K562 (cell line): ENCODE measurements at regions of chr2 and their contacts with region 1.

Region 1: GRCh38 chr2:177263451-177264208 is 897 bp downstream of the NFE2L2 start:
- DNase-seq: peak; percentile 75 to 99 (median 82)
- ATAC-seq: peak; percentile 69
- H3K4me3 ChIP-seq: peak overlapping the region; percentile 91
- H3K27ac ChIP-seq: peak overlapping the region; percentile 98
- H3K4me1 ChIP-seq: peaks cover 32 to 38% of the 10 kb centered on the region in 2 experiments
- H3K27me3 ChIP-seq: no peaks in the 10 kb centered on the region
- CTCF ChIP-seq: peak; percentile 86 to 94 (median 91)
- EP300 ChIP-seq: peak; percentile 83
- POLR2A ChIP-seq: peak; percentile 85
- RAD21 ChIP-seq: peak; percentile 85 to 95

Region 2: DNA sequence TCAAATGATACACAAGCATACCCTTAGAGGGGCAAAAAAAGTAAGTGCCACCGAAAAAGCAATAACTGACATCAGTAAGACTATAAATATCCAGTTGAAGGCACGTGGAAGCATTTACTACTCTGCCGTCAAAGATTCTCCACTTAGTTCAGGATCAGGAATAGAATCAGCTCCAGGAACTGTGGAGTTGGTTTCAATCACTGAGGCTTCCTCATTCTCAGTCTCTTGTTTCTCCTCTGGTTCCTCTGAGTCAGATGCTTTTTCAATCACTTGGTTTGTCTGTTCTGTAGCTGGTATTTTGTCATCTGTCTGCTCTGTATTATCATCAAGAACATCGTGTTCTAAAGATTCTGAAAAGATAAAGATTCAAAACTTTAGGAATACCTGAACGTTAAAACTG is 1333.8 kb before region 1 on chr2:
- CTCF ChIA-PET with region 1: no interaction called
- POLR2A ChIA-PET with region 1: no interaction called
- in situ Hi-C with region 1: no loop called
- intact Hi-C with region 1: no loop called
- DNase-seq: no peak
- ATAC-seq: no peak
- H3K4me3 ChIP-seq: no peak overlapping the region
- H3K27ac ChIP-seq: no peak overlapping the region
- H3K4me1 ChIP-seq: peaks cover 0 to 11% of the 10 kb centered on the region in 2 experiments; a peak in 2 of 5 replicates
- H3K27me3 ChIP-seq: no peaks in the 10 kb centered on the region
- CTCF ChIP-seq: no peak
- EP300 ChIP-seq: no peak
- POLR2A ChIP-seq: no peak
- RAD21 ChIP-seq: no peak

Region 3: GRCh38 chr2:177212106-177212890 is 51.3 kb before region 1 on chr2 and contains the start of gene HNRNPA3:
- CTCF ChIA-PET with region 1: no interaction called
- POLR2A ChIA-PET with region 1: interaction called, 15 read pairs
- in situ Hi-C with region 1: no loop called
- intact Hi-C with region 1: loop called (anchors 1 kb)
- DNase-seq: peak; percentile 98 to 100 (median 98)
- ATAC-seq: peak; percentile 88
- H3K4me3 ChIP-seq: peak within 1 kb of the TSS; percentile 90
- H3K27ac ChIP-seq: peak within 1 kb of the TSS; percentile 99
- H3K4me1 ChIP-seq: peaks cover 5 to 7% of the 10 kb centered on the region in 2 experiments; a peak in 4 of 5 replicates
- H3K27me3 ChIP-seq: no peaks in the 10 kb centered on the region
- CTCF ChIP-seq: peak in 2 of 3 experiments; percentile 27 to 47; a peak in 4 of 6 replicates
- EP300 ChIP-seq: no peak
- POLR2A ChIP-seq: peak; percentile 99
- RAD21 ChIP-seq: peak in 1 of 2 experiments; percentile 39; a peak in 2 of 4 replicates
- polyA plus RNA-seq, gene HNRNPA3: 108 to 192 TPM

Region 4: DNA sequence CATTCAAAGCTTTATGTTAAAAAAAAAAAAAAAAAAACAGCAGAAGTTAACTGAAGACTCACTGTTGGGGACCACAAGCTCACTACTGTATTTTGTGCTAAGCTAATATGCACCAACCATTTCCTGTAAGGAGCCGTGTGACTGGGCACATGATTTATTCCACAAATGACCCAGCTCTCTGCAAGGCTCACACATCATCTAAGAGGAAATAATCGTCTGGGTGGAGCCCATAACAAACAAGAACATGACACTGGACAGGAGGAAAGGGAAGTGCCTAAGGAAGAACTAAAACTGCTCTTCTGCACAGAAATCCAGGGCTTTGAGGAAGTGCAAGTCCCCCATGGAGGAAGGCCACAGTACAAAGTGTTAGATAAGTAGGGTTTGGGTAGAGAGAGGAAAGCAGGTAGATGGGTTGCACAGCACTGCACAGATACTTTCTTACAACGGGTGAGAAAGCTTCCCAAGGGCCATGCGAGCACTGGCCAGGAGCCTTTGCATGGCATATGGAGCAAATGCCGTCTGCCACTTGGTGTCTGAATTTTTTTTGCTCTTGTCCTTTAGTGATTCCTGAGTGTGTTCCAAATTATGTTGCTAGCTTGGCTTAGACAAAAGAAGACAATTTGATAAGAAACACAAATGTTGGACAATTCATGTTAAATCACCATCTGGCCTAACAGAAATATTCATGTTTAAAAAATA is 23.5 kb before region 1 on chr2:
- CTCF ChIA-PET with region 1: interaction called, 5 read pairs
- POLR2A ChIA-PET with region 1: interaction called, 19 read pairs
- in situ Hi-C with region 1: no loop called
- intact Hi-C with region 1: loop called (anchors 2 kb)
- DNase-seq: no peak
- ATAC-seq: peak; percentile 5
- H3K4me3 ChIP-seq: no peak overlapping the region
- H3K27ac ChIP-seq: peak overlapping the region; percentile 26; the same call in 2 of the 3 replicates
- H3K4me1 ChIP-seq: peaks cover 18 to 44% of the 10 kb centered on the region in 2 experiments
- H3K27me3 ChIP-seq: no peaks in the 10 kb centered on the region
- CTCF ChIP-seq: no peak
- EP300 ChIP-seq: no peak
- POLR2A ChIP-seq: no peak
- RAD21 ChIP-seq: no peak

Region 5: GRCh38 chr2:177296040-177296439 is 32.4 kb after region 1 on chr2:
- CTCF ChIA-PET with region 1: interaction called, 11 read pairs
- POLR2A ChIA-PET with region 1: interaction called, 12 read pairs
- in situ Hi-C with region 1: no loop called
- intact Hi-C with region 1: loop called (anchors 2 kb)
- DNase-seq: peak in 1 of 4 experiments; percentile 43
- ATAC-seq: peak; percentile 59
- H3K4me3 ChIP-seq: no peak overlapping the region
- H3K27ac ChIP-seq: no peak overlapping the region
- H3K4me1 ChIP-seq: no peaks in the 10 kb centered on the region
- H3K27me3 ChIP-seq: no peaks in the 10 kb centered on the region
- CTCF ChIP-seq: peak; percentile 36 to 62 (median 53); a peak in 5 of 6 replicates
- EP300 ChIP-seq: no peak
- POLR2A ChIP-seq: no peak
- RAD21 ChIP-seq: peak; percentile 49 to 77; a peak in 3 of 4 replicates

Region 6: DNA sequence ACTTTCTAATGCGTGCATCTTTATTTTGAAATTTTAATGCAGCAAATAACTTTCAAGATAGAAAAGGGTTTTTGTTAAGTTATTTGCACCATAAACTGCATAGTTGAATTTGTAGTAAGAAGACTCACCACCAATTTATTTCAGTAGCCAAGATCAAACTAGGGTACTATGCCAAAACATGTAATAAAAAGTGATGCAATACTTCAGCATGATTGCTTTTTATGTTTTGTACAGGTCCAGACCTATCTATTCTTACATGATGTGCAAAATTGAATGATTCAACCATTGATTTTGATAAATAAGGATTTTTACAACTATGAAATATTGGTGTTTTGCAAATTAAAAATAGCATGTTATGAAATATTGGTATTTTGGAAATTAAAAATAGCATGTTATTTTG is 155.6 kb after region 1 on chr2:
- CTCF ChIA-PET with region 1: interaction called, 3 read pairs
- POLR2A ChIA-PET with region 1: interaction called, 4 read pairs
- in situ Hi-C with region 1: no loop called
- intact Hi-C with region 1: loop called (anchors 5 kb)
- DNase-seq: no peak
- ATAC-seq: peak; percentile 37; the same call in 1 of the 3 replicates
- H3K4me3 ChIP-seq: no peak overlapping the region
- H3K27ac ChIP-seq: no peak overlapping the region
- H3K4me1 ChIP-seq: no peaks in the 10 kb centered on the region
- H3K27me3 ChIP-seq: no peaks in the 10 kb centered on the region
- CTCF ChIP-seq: no peak
- EP300 ChIP-seq: no peak
- POLR2A ChIP-seq: no peak
- RAD21 ChIP-seq: no peak

Region 7: DNA sequence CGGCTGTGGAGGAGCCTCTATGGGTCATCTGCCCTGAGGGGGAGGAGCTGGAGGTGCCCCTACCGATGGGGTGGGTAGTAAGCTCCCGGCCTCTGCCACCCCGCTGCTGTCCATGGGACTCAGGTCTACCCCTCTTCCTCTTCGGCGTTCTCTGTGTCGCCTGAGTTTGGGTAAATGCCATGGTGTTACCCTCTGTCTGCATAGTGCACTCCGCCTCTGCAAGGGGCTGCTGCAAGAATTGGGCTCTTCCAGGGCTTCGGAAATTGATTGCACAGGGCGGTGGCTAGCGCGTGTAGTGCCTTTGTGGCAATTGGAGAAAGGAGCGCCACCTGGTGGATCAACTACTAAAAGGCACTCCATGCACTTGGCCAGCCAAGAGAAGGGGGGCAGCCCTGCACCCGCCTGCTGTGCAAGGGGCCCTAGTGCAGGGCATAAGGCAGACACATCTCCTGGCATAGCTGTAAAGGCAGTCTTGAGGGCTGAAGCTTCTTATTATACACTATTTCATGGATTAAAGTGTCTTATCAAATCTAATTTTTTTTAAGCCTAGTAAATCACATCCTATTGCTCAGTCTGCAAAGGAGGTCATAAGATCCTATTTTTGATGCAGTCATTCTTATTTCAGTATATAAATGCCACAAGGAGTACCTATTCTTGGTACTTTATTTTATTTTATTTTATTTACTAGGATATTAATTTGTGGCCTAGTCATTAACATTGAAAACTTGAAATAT is 500.1 kb after region 1 on chr2:
- CTCF ChIA-PET with region 1: interaction called, 3 read pairs
- POLR2A ChIA-PET with region 1: interaction called, 5 read pairs
- in situ Hi-C with region 1: no loop called
- intact Hi-C with region 1: loop called (anchors 5 kb)
- DNase-seq: peak; percentile 74 to 90 (median 85)
- ATAC-seq: peak; percentile 98
- H3K4me3 ChIP-seq: no peak overlapping the region
- H3K27ac ChIP-seq: no peak overlapping the region
- H3K4me1 ChIP-seq: peaks cover 4 to 16% of the 10 kb centered on the region in 2 experiments; a peak in 4 of 5 replicates
- H3K27me3 ChIP-seq: no peaks in the 10 kb centered on the region
- CTCF ChIP-seq: peak; percentile 91 to 96 (median 92)
- EP300 ChIP-seq: no peak
- POLR2A ChIP-seq: no peak
- RAD21 ChIP-seq: peak; percentile 69 to 77